GM12878 (cell line): ENCODE measurements at regions of chr6 and their contacts with region 1.

Region 1: DNA sequence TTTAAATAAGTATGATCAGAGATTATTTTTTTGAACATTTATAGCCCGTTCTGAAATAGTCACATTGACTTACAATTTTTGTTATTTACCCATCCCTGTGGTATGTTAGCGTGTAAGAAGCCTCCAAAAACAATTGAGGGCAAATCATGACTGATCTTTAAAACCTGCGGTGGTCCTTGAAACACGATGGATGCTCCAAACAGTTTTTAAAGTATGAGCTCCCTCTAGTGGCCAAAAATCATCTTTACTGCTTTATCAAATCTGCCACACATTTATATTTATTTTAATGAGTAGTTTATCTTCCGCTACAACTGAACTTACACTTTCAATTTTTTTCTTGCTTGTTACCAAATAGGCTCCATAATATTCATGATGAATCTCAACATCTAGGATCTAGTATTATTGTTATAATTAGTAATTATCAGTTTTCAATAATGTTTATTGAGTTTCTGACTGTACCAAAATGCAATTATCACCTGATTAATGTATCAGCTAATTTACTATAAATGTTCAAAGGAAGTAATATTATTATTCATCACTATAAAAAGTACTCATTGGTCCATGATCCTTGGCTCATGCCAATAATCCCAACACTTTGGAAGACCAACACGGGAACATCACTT is 52.2 kb downstream of the MARCKS start:
- DNase-seq: peak; percentile 7
- ATAC-seq: peak; percentile 84
- H3K4me3 ChIP-seq: no peak overlapping the region
- H3K27ac ChIP-seq: no peak overlapping the region
- H3K4me1 ChIP-seq: no peaks in the 10 kb centered on the region
- H3K27me3 ChIP-seq: no peaks in the 10 kb centered on the region
- CTCF ChIP-seq: peak; percentile 44 to 76 (median 50); a peak in 5 of 6 replicates
- EP300 ChIP-seq: no peak
- POLR2A ChIP-seq: no peak
- RAD21 ChIP-seq: peak; percentile 84

Region 2: GRCh38 chr6:112879920-112880413 is 1029.4 kb before region 1 on chr6:
- CTCF ChIA-PET with region 1: interaction called, 32 read pairs
- POLR2A ChIA-PET with region 1: no interaction called
- RAD21 ChIA-PET with region 1: interaction called, 19 read pairs
- SMC1A ChIA-PET with region 1: interaction called, 4 read pairs
- in situ Hi-C with region 1: no loop called
- intact Hi-C with region 1: loop called (anchors 5 kb)
- DNase-seq: no peak
- ATAC-seq: peak; percentile 98
- H3K4me3 ChIP-seq: no peak overlapping the region
- H3K27ac ChIP-seq: no peak overlapping the region
- H3K4me1 ChIP-seq: no peaks in the 10 kb centered on the region
- H3K27me3 ChIP-seq: no peaks in the 10 kb centered on the region
- CTCF ChIP-seq: peak in 2 of 3 experiments; percentile 31 to 50; a peak in 3 of 6 replicates
- EP300 ChIP-seq: no peak
- POLR2A ChIP-seq: peak; percentile 24; the same call in 1 of the 2 replicates
- RAD21 ChIP-seq: peak; percentile 18; the same call in 1 of the 2 replicates

Region 3: DNA sequence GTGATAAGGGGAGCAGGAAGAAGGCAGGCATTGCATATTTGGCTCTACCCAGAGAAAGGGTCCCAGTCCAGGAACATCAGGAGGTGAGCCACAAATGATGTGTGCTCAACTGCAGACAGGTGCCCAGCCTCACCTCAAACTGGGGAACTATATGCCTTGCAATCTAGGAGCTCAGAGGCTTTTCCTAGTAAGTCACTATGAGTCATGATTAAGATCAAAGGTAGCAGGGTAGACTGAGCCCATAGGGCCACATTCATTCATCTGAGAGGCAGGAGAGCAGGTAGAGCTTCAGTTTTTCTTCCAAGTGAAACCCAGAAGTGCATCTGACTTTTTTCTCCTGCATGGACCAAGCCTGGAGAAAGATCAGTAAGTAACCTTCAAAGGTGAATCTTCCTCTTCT is 20.9 kb before region 1 on chr6:
- CTCF ChIA-PET with region 1: interaction called, 11 read pairs
- POLR2A ChIA-PET with region 1: no interaction called
- RAD21 ChIA-PET with region 1: no interaction called
- SMC1A ChIA-PET with region 1: interaction called, 14 read pairs
- in situ Hi-C with region 1: no loop called
- intact Hi-C with region 1: no loop called
- DNase-seq: no peak
- ATAC-seq: no peak
- H3K4me3 ChIP-seq: no peak overlapping the region
- H3K27ac ChIP-seq: no peak overlapping the region
- H3K4me1 ChIP-seq: no peaks in the 10 kb centered on the region
- H3K27me3 ChIP-seq: no peaks in the 10 kb centered on the region
- CTCF ChIP-seq: no peak
- EP300 ChIP-seq: no peak
- POLR2A ChIP-seq: no peak
- RAD21 ChIP-seq: no peak

Region 4: DNA sequence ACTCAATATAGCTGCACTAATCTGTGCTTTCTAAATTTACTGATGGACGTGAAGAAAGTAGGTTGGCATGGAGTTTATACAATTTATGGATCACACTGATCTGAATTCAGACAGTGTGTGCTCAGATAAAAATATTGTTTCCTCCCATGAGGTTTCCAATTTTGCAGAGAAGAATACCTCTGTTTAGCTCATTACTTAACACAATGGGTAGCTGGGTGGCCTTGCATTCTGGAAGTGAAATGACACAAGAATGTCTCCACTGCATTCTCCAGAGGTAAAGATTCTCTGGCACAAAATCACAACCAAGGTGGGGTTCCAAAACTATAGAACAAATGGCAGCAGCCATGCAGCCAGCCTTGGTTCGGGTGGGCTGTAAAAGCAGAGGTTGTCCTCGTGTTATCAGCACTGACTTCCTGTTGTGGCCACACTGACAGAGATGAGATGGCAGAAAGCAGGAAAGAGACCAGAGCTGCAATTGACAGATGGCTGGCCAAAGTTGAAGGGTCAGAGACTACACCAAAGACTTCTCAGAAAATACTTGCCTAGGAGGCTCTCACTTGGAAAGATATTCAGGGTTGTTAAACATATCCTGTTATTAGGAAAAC is 11.4 kb after region 1 on chr6:
- CTCF ChIA-PET with region 1: interaction called, 17 read pairs
- POLR2A ChIA-PET with region 1: no interaction called
- RAD21 ChIA-PET with region 1: interaction called, 5 read pairs
- SMC1A ChIA-PET with region 1: interaction called, 15 read pairs
- in situ Hi-C with region 1: no loop called
- intact Hi-C with region 1: no loop called
- DNase-seq: no peak
- ATAC-seq: peak; percentile 78
- H3K4me3 ChIP-seq: no peak overlapping the region
- H3K27ac ChIP-seq: no peak overlapping the region
- H3K4me1 ChIP-seq: peaks cover 3% of the 10 kb centered on the region; the same call in 1 of the 2 replicates
- H3K27me3 ChIP-seq: no peaks in the 10 kb centered on the region
- CTCF ChIP-seq: no peak
- EP300 ChIP-seq: no peak
- POLR2A ChIP-seq: no peak
- RAD21 ChIP-seq: no peak